Heart right ventricle (tissue), 16 donors: ENCODE measurements at regions of chr9 and their contacts with region 1.

Region 1: GRCh38 chr9:35553670-35554543 is 51.2 kb upstream of the TESK1 start:
- DNase-seq: peak; percentile 40 to 78
- ATAC-seq: peak; percentile 80 to 91 (median 88)
- H3K4me3 ChIP-seq: no peak overlapping the region
- H3K27ac ChIP-seq: peak overlapping the region in 9 of 10 donors; percentile 11 to 71 (median 47)
- H3K4me1 ChIP-seq: peaks cover 4 to 42% (median 17%) of the 10 kb centered on the region in 9 donors
- H3K27me3 ChIP-seq: no peaks in the 10 kb centered on the region
- CTCF ChIP-seq: peak; percentile 84 to 96 (median 93)

Region 2: DNA sequence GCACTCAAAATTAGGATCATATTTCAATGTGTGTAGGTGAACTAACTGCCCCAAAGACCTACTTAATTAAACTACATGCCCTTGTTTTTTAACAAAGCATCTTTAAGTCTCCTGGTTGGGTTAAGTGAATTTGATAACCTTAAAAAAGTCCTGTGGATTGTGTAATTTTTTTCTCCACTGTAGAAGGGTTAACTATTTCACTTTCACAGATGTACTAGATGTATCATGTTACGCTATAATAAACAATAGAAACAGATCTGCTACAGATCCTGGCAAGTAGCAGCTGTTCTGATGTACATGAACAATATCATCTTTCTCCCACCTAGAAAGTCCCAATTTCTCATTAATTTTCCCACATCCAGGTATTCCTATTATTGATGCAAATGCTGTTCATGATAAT is 1243.7 kb before region 1 on chr9:
- intact Hi-C with region 1: no loop called
- DNase-seq: no peak
- ATAC-seq: no peak
- H3K4me3 ChIP-seq: no peak overlapping the region
- H3K27ac ChIP-seq: no peak overlapping the region
- H3K4me1 ChIP-seq: peaks cover 0 to 3% (median 0%) of the 10 kb centered on the region in 9 donors
- H3K27me3 ChIP-seq: no peaks in the 10 kb centered on the region
- CTCF ChIP-seq: no peak

Region 3: DNA sequence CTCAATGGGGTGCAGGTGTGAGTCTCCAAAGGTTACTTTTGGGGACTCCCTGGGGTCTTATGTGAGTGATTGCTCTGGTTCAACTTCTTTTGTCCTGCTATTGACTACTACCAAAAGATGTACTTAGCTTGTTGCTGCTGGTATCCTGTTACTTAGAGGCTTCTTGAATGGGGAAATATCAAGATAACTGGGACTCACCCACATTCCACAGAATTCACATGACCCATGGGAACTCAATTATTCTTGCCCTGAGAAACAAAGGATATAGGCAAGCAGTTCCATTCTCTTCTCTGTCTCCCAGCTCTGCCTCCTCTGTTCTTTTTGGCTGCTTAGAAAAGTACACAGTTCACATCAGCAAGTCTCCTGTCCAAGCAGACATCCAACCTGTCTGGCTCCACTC is 286.2 kb before region 1 on chr9:
- intact Hi-C with region 1: loop called in 1 of 10 experiments (anchors 10 kb)
- DNase-seq: no peak
- ATAC-seq: peak in 1 of 8 donors; percentile 11
- H3K4me3 ChIP-seq: no peak overlapping the region
- H3K27ac ChIP-seq: peak overlapping the region in 1 of 10 donors; percentile 42
- H3K4me1 ChIP-seq: peaks cover 0 to 22% (median 15%) of the 10 kb centered on the region in 9 donors
- H3K27me3 ChIP-seq: no peaks in the 10 kb centered on the region
- CTCF ChIP-seq: no peak

Region 4: DNA sequence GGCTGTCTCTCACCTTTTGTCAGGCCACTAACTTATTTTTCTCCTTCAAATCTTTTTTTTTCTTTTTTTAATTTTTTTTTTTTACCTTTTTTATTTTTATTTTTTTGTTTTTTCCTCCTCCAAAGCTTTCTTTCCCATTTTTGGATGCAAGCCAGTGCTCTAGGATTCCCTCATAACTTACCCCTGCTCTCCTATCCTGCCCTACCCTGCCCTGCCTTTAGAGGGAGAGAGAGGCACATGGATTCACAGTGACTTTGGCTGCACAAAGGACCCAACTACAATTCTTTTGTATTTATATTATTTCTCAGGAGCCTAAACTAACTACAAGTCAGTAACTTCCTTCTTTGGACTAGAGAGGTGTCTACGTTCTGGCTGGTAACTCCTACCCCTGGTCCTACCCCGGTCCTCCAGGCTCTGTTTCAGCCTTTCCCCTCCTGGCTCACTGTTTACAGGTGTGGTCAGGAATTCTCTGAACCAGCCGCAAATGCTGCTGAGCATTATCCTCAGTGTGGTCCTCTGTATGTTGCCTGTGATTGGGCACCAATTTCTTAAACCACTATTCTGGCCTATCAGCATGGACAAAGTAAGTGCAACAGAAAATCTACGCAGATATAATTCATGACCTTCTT is 72.4 kb before region 1 on chr9:
- intact Hi-C with region 1: loop called in 7 of 10 experiments (anchors 2 to 5 kb)
- DNase-seq: peak in 1 of 2 donors; percentile 51
- ATAC-seq: peak in 4 of 8 donors; percentile 57 to 65 (median 60)
- H3K4me3 ChIP-seq: no peak overlapping the region
- H3K27ac ChIP-seq: no peak overlapping the region
- H3K4me1 ChIP-seq: peaks cover 0 to 6% (median 0%) of the 10 kb centered on the region in 9 donors
- H3K27me3 ChIP-seq: no peaks in the 10 kb centered on the region
- CTCF ChIP-seq: peak; percentile 26 to 72 (median 67)

Region 5: DNA sequence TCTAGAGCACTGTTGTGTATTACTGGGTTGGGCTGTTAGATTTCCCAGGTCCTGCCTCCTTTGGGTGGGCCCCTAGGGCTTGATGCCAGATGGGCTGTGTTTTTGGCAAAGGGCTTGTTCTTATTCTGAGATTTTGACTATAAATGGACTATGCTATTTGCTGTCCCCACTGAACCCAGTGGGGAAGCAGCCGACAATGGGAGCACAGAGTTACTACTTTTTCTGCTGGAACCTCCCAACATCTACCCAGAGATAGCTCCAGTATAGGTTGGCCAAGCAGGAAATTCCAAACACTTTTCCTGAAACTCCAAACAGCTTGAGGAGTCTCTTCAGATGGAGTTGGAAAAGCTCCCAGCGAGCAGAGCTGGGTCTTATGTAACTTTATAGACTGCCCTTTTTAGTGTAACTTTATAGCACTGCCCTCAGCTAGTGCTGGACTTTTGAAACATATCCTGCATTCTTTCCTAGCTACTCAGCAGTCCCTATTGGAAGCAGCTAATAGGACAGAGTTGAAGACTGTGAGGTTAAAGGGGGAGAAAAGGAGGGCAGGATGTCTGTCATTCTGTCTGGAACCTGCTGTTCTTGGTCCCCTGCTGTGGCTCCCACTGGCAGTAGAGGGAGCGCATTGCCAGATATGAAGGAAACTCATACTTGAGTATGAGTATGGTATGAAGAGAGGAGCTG is 43.0 kb before region 1 on chr9:
- intact Hi-C with region 1: loop called in 2 of 10 experiments (anchors 5 kb)
- DNase-seq: peak; percentile 81 to 93
- ATAC-seq: peak; percentile 86 to 96 (median 95)
- H3K4me3 ChIP-seq: peak overlapping the region in 3 of 10 donors; percentile 2 to 32 (median 6)
- H3K27ac ChIP-seq: peak overlapping the region; percentile 68 to 91 (median 82)
- H3K4me1 ChIP-seq: peaks cover 3 to 78% (median 34%) of the 10 kb centered on the region in 9 donors
- H3K27me3 ChIP-seq: no peaks in the 10 kb centered on the region
- CTCF ChIP-seq: peak in 8 of 9 donors; percentile 17 to 68 (median 41)

Region 6: GRCh38 chr9:35518226-35518821 is 35.6 kb before region 1 on chr9:
- intact Hi-C with region 1: loop called in 2 of 10 experiments (anchors 5 kb)
- DNase-seq: no peak
- ATAC-seq: peak in 6 of 8 donors; percentile 7 to 44 (median 25)
- H3K4me3 ChIP-seq: no peak overlapping the region
- H3K27ac ChIP-seq: peak overlapping the region; percentile 21 to 91 (median 78)
- H3K4me1 ChIP-seq: peaks cover 31 to 88% (median 70%) of the 10 kb centered on the region in 9 donors
- H3K27me3 ChIP-seq: no peaks in the 10 kb centered on the region
- CTCF ChIP-seq: no peak

Region 7: GRCh38 chr9:35579130-35579529 is 25.2 kb after region 1 on chr9:
- intact Hi-C with region 1: no loop called
- DNase-seq: no peak
- ATAC-seq: no peak
- H3K4me3 ChIP-seq: no peak overlapping the region
- H3K27ac ChIP-seq: no peak overlapping the region
- H3K4me1 ChIP-seq: no peaks in the 10 kb centered on the region
- H3K27me3 ChIP-seq: no peaks in the 10 kb centered on the region
- CTCF ChIP-seq: no peak